ENCODE measurements at regions of chr6 and their contacts with region 1.

Region 1: DNA sequence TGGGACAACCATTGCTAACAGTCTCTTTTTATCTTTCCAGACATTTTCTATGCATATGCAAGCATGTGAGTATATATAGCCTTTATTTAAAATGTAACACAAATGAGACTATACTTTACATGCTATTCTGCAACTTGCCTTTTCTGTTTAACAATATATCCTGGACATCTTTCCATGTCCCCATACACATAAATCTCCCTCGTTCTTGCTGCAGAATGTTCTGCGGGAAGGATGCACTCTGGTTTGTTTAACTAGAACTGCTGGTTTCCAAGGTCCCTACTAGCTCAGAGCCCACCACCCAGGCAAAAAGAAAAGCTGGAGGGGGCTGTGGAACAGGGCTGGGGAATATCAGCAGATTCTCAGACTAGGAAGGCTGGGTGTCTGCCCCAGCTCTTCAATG is 35.2 kb upstream of the CCDC167 start:
- DNase-seq: no peak
- H3K4me3 ChIP-seq: no peak overlapping the region
- H3K4me3 Mint-ChIP-seq: peak overlapping the region in 1 of 2 donors; percentile 36
- H3K27ac ChIP-seq: no peak overlapping the region
- H3K27ac Mint-ChIP-seq: no peak overlapping the region
- H3K4me1 ChIP-seq: peaks cover 0 to 7% of the 10 kb centered on the region in 2 donors
- H3K4me1 Mint-ChIP-seq: peaks cover 4% of the 10 kb centered on the region
- H3K27me3 ChIP-seq: peaks cover 27 to 59% of the 10 kb centered on the region in 2 donors
- H3K27me3 Mint-ChIP-seq: peaks cover 68 to 85% (median 70%) of the 10 kb centered on the region in 3 donors
- CTCF ChIP-seq: no peak

Region 2: DNA sequence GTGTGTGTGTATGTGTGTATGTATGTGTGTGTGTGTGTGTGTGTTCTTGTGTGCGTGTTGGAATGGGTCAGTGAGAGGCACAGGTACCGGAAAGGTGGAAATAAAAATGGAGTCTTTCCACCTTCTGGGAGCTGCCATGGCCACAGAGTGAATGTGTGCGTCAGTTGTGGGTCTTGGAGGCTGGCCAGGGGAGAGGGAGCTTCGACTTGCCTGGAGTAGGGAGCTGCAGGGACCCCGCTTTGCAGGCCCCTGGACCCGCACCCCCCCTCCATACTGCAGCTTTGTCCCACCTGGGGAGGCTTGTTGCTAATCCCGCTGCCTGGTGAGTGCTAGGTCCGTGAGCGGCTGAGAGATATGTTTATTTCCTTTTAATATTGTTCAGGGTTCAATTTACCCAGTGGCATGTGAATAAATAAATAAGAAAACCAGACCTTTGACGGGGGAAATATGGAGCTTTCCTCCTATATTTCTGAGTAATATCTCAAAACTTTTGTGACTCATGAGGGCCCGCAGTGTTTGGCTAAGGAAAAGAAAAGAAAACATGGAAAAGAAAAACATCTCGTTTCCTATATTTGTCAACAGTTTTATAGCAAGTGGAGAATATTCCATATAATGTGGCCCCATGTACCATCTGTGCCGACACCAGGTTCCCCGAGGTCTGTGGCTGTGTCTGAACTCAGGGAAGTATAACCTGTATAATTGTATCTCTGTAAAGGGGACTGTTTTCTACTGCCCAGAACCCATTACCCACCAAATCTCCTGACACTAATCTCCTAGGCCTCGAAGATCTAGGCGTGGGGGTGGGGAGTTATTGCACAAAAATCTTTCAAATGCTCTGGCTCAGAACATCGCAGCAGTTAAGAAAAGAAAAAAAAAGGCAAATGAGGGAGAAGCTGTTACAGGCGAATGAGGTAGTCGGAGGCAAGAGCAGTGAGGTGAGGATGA is 10.6 kb before region 1 on chr6:
- intact Hi-C with region 1: loop called in 1 of 2 experiments (anchors 1 kb)
- DNase-seq: no peak
- H3K4me3 ChIP-seq: no peak overlapping the region
- H3K4me3 Mint-ChIP-seq: no peak overlapping the region
- H3K27ac ChIP-seq: no peak overlapping the region
- H3K27ac Mint-ChIP-seq: no peak overlapping the region
- H3K4me1 ChIP-seq: no peaks in the 10 kb centered on the region
- H3K4me1 Mint-ChIP-seq: no peaks in the 10 kb centered on the region
- H3K27me3 ChIP-seq: peaks cover 0 to 8% of the 10 kb centered on the region in 2 donors
- H3K27me3 Mint-ChIP-seq: peaks cover 19 to 30% (median 23%) of the 10 kb centered on the region in 3 donors
- CTCF ChIP-seq: no peak

Region 3: DNA sequence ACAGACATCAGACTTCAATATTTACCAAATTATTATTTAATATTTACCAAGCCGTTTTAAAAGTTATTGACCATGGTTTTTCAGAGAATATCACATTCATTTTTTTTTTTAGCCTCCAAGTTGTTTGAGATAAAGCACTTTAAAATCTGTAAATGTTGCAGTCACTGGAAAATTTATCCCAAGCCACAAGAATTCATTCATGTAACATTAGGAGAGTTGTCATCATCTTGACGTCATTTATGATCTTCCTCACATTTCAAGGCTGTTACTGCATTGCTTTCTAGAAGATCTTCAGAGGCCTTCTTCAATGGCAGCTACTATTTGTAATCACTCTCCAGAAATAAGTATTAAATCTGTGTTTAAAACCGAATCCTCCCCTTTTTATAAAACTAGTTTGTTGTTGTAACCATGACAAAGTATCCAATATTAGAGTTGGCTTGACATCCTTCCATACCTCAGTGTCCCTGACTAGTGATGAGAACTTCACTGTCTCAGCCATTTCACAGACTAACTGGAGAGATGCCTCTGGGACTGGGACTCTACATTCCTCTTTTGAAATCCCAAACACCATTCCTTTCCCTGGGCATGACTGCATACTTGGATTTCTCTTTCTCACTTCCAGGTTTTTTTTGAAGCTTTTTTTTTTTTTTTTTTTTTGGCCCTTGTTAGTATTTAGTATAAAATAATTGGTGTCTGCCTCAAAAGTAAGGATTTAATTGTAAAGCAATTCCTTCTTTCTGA is 384.7 kb after region 1 on chr6:
- intact Hi-C with region 1: no loop called
- DNase-seq: no peak
- H3K4me3 ChIP-seq: no peak overlapping the region
- H3K4me3 Mint-ChIP-seq: no peak overlapping the region
- H3K27ac ChIP-seq: no peak overlapping the region
- H3K27ac Mint-ChIP-seq: no peak overlapping the region
- H3K4me1 ChIP-seq: no peaks in the 10 kb centered on the region
- H3K4me1 Mint-ChIP-seq: peaks cover 8% of the 10 kb centered on the region
- H3K27me3 ChIP-seq: no peaks in the 10 kb centered on the region
- H3K27me3 Mint-ChIP-seq: no peaks in the 10 kb centered on the region
- CTCF ChIP-seq: no peak